ENCODE measurements at regions of chr9 and their contacts with region 1.

Region 1: DNA sequence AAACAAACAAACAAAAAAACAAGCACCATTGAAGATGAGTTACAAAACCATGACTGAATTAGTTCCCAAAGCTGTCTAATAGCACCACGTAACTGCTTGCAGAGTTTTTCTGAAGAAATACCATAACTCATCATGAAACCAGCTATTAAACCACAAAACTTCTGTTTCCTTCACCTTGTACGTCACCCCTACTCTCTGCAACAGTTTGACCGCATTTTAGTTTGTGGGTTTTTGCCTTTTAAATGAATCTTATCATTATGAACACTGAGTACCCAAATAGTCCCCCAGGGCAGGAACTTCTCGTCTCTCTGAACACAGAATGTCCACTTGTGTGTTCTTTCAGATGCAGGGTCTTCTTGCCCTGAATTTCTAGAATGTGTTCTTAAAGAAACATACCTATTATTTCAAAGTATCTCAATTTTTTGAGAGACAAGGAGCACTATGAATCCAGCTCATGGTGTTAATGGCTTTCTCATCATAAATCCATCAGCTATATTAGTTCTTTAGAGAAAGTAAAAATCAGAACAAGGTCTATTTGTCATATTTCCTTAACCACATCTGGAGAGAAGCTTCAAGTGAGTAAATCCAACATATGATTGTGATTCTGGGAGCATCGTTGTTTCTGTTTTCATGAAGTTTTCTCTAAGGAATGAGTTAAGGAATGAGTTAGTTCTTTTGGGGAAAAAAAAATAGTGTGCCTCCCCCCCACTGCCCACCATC is 210.6 kb downstream of the AUH start:
- DNase-seq: peak; percentile 55
- H3K4me3 Mint-ChIP-seq: peak overlapping the region; percentile 32
- H3K27ac Mint-ChIP-seq: peak overlapping the region; percentile 97
- H3K4me1 Mint-ChIP-seq: peaks cover 72% of the 10 kb centered on the region
- H3K27me3 Mint-ChIP-seq: no peaks in the 10 kb centered on the region

Region 2: GRCh38 chr9:91047993-91048607 is 103.1 kb before region 1 on chr9:
- CTCF ChIA-PET with region 1: no interaction called
- POLR2A ChIA-PET with region 1: interaction called, 5 read pairs
- intact Hi-C with region 1: loop called (anchors 1 kb)
- DNase-seq: peak; percentile 73
- H3K4me3 Mint-ChIP-seq: no peak overlapping the region
- H3K27ac Mint-ChIP-seq: peak overlapping the region; percentile 83
- H3K4me1 Mint-ChIP-seq: peaks cover 58% of the 10 kb centered on the region
- H3K27me3 Mint-ChIP-seq: peaks cover 40% of the 10 kb centered on the region

Region 3: DNA sequence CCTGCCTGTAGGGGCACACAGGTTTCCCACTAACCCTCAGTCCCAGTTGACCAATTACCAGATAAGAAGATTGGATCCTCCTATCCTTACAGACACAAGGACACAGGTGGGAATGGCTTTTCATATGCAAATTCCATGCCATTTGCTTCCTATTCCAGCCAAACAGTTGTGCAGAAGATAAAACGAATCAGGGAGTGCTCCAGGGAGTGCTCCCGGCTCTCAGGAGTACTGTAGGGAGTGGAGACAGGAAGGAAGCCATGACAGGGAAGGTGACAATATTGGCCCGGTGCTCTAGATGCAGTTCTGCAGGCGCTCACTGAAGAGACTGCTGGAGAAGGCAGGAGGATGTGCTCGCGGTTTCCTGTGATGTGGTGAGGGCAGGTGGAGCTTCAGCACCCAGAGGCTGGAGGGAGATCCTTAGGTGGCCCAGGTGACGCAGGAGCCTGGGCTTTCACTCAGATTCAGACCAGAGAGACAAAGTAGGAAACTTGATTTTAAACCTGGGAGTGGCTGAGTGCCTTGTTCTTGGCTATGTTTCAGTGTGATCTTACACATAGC is 49.5 kb before region 1 on chr9:
- CTCF ChIA-PET with region 1: interaction called, 10 read pairs
- POLR2A ChIA-PET with region 1: interaction called, 43 read pairs
- intact Hi-C with region 1: loop called (anchors 1 kb)
- DNase-seq: peak; percentile 95
- H3K4me3 Mint-ChIP-seq: peak overlapping the region; percentile 73
- H3K27ac Mint-ChIP-seq: peak overlapping the region; percentile 93
- H3K4me1 Mint-ChIP-seq: peaks cover 56% of the 10 kb centered on the region
- H3K27me3 Mint-ChIP-seq: peaks cover 5% of the 10 kb centered on the region

Region 4: GRCh38 chr9:91164724-91165520 is 13.8 kb after region 1 on chr9:
- CTCF ChIA-PET with region 1: interaction called, 3 read pairs
- POLR2A ChIA-PET with region 1: interaction called, 39 read pairs
- intact Hi-C with region 1: loop called (anchors 1 kb)
- DNase-seq: peak; percentile 88
- H3K4me3 Mint-ChIP-seq: peak overlapping the region; percentile 61
- H3K27ac Mint-ChIP-seq: peak overlapping the region; percentile 92
- H3K4me1 Mint-ChIP-seq: peaks cover 46% of the 10 kb centered on the region
- H3K27me3 Mint-ChIP-seq: no peaks in the 10 kb centered on the region

Region 5: GRCh38 chr9:91193658-91194391 is 42.7 kb after region 1 on chr9:
- CTCF ChIA-PET with region 1: interaction called, 27 read pairs
- POLR2A ChIA-PET with region 1: interaction called, 44 read pairs
- intact Hi-C with region 1: loop called (anchors 1 kb)
- DNase-seq: peak; percentile 92
- H3K4me3 Mint-ChIP-seq: peak overlapping the region; percentile 77
- H3K27ac Mint-ChIP-seq: peak overlapping the region; percentile 98
- H3K4me1 Mint-ChIP-seq: peaks cover 62% of the 10 kb centered on the region
- H3K27me3 Mint-ChIP-seq: no peaks in the 10 kb centered on the region

Region 6: GRCh38 chr9:91231619-91232018 is 80.5 kb after region 1 on chr9:
- CTCF ChIA-PET with region 1: no interaction called
- POLR2A ChIA-PET with region 1: no interaction called
- intact Hi-C with region 1: no loop called
- DNase-seq: no peak
- H3K4me3 Mint-ChIP-seq: no peak overlapping the region
- H3K27ac Mint-ChIP-seq: no peak overlapping the region
- H3K4me1 Mint-ChIP-seq: no peaks in the 10 kb centered on the region
- H3K27me3 Mint-ChIP-seq: no peaks in the 10 kb centered on the region

Region 7: GRCh38 chr9:91346652-91347051 is 195.5 kb after region 1 on chr9:
- CTCF ChIA-PET with region 1: no interaction called
- POLR2A ChIA-PET with region 1: interaction called, 4 read pairs
- intact Hi-C with region 1: loop called (anchors 1 kb)
- DNase-seq: no peak
- H3K4me3 Mint-ChIP-seq: no peak overlapping the region
- H3K27ac Mint-ChIP-seq: no peak overlapping the region
- H3K4me1 Mint-ChIP-seq: peaks cover 57% of the 10 kb centered on the region
- H3K27me3 Mint-ChIP-seq: no peaks in the 10 kb centered on the region